CD8-positive, alpha-beta T cell (primary cell): ENCODE measurements at regions of chr5 and their contacts with region 1.

Region 1: GRCh38 chr5:148957591-148958202 is 105.2 kb downstream of the SH3TC2 start:
- DNase-seq: peak; percentile 15 to 69 (median 50)
- ATAC-seq: peak; percentile 58
- H3K4me3 ChIP-seq: no peak overlapping the region
- H3K4me3 Mint-ChIP-seq: no peak overlapping the region
- H3K27ac ChIP-seq: no peak overlapping the region
- H3K27ac Mint-ChIP-seq: no peak overlapping the region
- H3K4me1 ChIP-seq: no peaks in the 10 kb centered on the region
- H3K4me1 Mint-ChIP-seq: no peaks in the 10 kb centered on the region
- H3K27me3 ChIP-seq: no peaks in the 10 kb centered on the region
- H3K27me3 Mint-ChIP-seq: peaks cover 3% of the 10 kb centered on the region
- CTCF ChIP-seq: peak; percentile 90

Region 2: GRCh38 chr5:148740966-148741742 is 216.5 kb before region 1 on chr5:
- CTCF ChIA-PET with region 1: interaction called, 92 read pairs
- POLR2A ChIA-PET with region 1: no interaction called
- intact Hi-C with region 1: loop called (anchors 1 kb)
- DNase-seq: peak in 2 of 9 experiments; percentile 66 to 73
- ATAC-seq: peak; percentile 59
- H3K4me3 ChIP-seq: no peak overlapping the region
- H3K4me3 Mint-ChIP-seq: no peak overlapping the region
- H3K27ac ChIP-seq: no peak overlapping the region
- H3K27ac Mint-ChIP-seq: no peak overlapping the region
- H3K4me1 ChIP-seq: no peaks in the 10 kb centered on the region
- H3K4me1 Mint-ChIP-seq: no peaks in the 10 kb centered on the region
- H3K27me3 ChIP-seq: no peaks in the 10 kb centered on the region
- H3K27me3 Mint-ChIP-seq: peaks cover 25% of the 10 kb centered on the region
- CTCF ChIP-seq: peak; percentile 81

Region 3: GRCh38 chr5:148805326-148806290 is 152.1 kb before region 1 on chr5:
- CTCF ChIA-PET with region 1: interaction called, 11 read pairs
- POLR2A ChIA-PET with region 1: no interaction called
- intact Hi-C with region 1: no loop called
- DNase-seq: no peak
- ATAC-seq: no peak
- H3K4me3 ChIP-seq: no peak overlapping the region
- H3K4me3 Mint-ChIP-seq: no peak overlapping the region
- H3K27ac ChIP-seq: no peak overlapping the region
- H3K27ac Mint-ChIP-seq: no peak overlapping the region
- H3K4me1 ChIP-seq: peaks cover 16% of the 10 kb centered on the region
- H3K4me1 Mint-ChIP-seq: peaks cover 25% of the 10 kb centered on the region
- H3K27me3 ChIP-seq: no peaks in the 10 kb centered on the region
- H3K27me3 Mint-ChIP-seq: peaks cover 2% of the 10 kb centered on the region
- CTCF ChIP-seq: no peak

Region 4: DNA sequence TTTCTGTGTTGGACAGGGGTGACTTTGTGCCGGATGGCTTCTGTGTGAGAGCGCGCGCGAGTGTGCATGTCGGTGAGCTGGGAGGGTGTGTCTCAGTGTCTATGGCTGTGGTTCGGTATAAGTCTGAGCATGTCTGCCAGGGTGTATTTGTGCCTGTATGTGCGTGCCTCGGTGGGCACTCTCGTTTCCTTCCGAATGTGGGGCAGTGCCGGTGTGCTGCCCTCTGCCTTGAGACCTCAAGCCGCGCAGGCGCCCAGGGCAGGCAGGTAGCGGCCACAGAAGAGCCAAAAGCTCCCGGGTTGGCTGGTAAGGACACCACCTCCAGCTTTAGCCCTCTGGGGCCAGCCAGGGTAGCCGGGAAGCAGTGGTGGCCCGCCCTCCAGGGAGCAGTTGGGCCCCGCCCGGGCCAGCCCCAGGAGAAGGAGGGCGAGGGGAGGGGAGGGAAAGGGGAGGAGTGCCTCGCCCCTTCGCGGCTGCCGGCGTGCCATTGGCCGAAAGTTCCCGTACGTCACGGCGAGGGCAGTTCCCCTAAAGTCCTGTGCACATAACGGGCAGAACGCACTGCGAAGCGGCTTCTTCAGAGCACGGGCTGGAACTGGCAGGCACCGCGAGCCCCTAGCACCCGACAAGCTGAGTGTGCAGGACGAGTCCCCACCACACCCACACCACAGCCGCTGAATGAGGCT is 131.5 kb before region 1 on chr5 and contains the start of gene ADRB2:
- CTCF ChIA-PET with region 1: interaction called, 54 read pairs
- POLR2A ChIA-PET with region 1: interaction called, 3 read pairs
- intact Hi-C with region 1: loop called (anchors 1 to 5 kb)
- DNase-seq: peak; percentile 78 to 96 (median 86)
- ATAC-seq: peak; percentile 88
- H3K4me3 ChIP-seq: peak within 1 kb of the TSS; percentile 62 to 73
- H3K4me3 Mint-ChIP-seq: peak within 1 kb of the TSS; percentile 89
- H3K27ac ChIP-seq: peak within 1 kb of the TSS; percentile 57 to 75
- H3K27ac Mint-ChIP-seq: peak within 1 kb of the TSS; percentile 87
- H3K4me1 ChIP-seq: peaks cover 11% of the 10 kb centered on the region
- H3K4me1 Mint-ChIP-seq: peaks cover 53% of the 10 kb centered on the region
- H3K27me3 ChIP-seq: no peaks in the 10 kb centered on the region
- H3K27me3 Mint-ChIP-seq: no peaks in the 10 kb centered on the region
- CTCF ChIP-seq: no peak
- total RNA-seq, gene ADRB2: 7.6 to 8.8 TPM

Region 5: DNA sequence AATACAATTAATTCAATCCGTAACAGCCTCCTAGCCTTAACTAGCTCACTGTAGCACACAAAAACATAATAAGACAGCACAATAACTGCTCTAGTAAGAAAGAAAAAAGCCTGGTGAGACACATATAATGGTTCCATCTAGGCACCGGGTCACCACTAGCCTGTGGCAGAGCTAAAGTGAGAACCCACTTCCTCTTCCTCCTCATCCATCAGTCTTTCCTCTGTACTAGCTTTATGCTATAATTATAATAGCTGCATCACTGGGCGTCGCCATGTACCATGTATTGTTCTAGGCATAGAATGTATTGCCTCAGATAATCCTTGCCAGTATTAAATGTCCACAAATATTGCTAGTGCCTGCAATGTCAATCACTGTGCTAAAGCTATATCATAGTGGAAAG is 108.2 kb before region 1 on chr5:
- CTCF ChIA-PET with region 1: interaction called, 15 read pairs
- POLR2A ChIA-PET with region 1: interaction called, 4 read pairs
- intact Hi-C with region 1: loop called (anchors 5 kb)
- DNase-seq: peak in 6 of 9 experiments; percentile 13 to 86 (median 64)
- ATAC-seq: peak; percentile 58
- H3K4me3 ChIP-seq: peak overlapping the region in 1 of 2 experiments; percentile 11
- H3K4me3 Mint-ChIP-seq: peak overlapping the region; percentile 5
- H3K27ac ChIP-seq: peak overlapping the region; percentile 42 to 91
- H3K27ac Mint-ChIP-seq: peak overlapping the region; percentile 89
- H3K4me1 ChIP-seq: peaks cover 52% of the 10 kb centered on the region
- H3K4me1 Mint-ChIP-seq: peaks cover 71% of the 10 kb centered on the region
- H3K27me3 ChIP-seq: no peaks in the 10 kb centered on the region
- H3K27me3 Mint-ChIP-seq: no peaks in the 10 kb centered on the region
- CTCF ChIP-seq: no peak

Region 6: DNA sequence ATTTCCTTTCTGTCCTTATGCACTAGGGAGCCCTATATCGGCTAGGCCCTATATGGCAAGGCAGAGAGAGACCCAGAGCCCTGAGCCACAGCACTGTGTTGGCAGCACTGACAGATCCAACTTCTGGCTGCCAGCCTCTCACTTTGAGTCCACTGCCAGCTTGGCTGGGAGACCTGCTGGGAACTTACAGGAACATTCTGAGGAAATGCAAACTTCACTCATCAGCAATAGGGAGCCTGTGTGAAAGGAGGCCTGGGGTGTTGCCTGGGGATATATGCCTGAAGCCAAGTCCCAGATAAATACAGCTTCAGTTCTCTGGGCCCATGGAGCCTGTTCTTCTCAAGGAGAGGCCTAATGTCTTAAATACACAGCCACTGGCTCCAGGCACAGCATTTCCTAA is 53.3 kb before region 1 on chr5:
- CTCF ChIA-PET with region 1: no interaction called
- POLR2A ChIA-PET with region 1: no interaction called
- intact Hi-C with region 1: no loop called
- DNase-seq: no peak
- ATAC-seq: no peak
- H3K4me3 ChIP-seq: no peak overlapping the region
- H3K4me3 Mint-ChIP-seq: no peak overlapping the region
- H3K27ac ChIP-seq: no peak overlapping the region
- H3K27ac Mint-ChIP-seq: no peak overlapping the region
- H3K4me1 ChIP-seq: no peaks in the 10 kb centered on the region
- H3K4me1 Mint-ChIP-seq: peaks cover 2% of the 10 kb centered on the region
- H3K27me3 ChIP-seq: no peaks in the 10 kb centered on the region
- H3K27me3 Mint-ChIP-seq: no peaks in the 10 kb centered on the region
- CTCF ChIP-seq: no peak

Region 7: GRCh38 chr5:148970228-148970627 is 12.5 kb after region 1 on chr5:
- CTCF ChIA-PET with region 1: interaction called, 13 read pairs
- POLR2A ChIA-PET with region 1: no interaction called
- intact Hi-C with region 1: no loop called
- DNase-seq: no peak
- ATAC-seq: no peak
- H3K4me3 ChIP-seq: no peak overlapping the region
- H3K4me3 Mint-ChIP-seq: no peak overlapping the region
- H3K27ac ChIP-seq: no peak overlapping the region
- H3K27ac Mint-ChIP-seq: no peak overlapping the region
- H3K4me1 ChIP-seq: no peaks in the 10 kb centered on the region
- H3K4me1 Mint-ChIP-seq: no peaks in the 10 kb centered on the region
- H3K27me3 ChIP-seq: peaks cover 0 to 3% of the 10 kb centered on the region in 2 experiments
- H3K27me3 Mint-ChIP-seq: peaks cover 9% of the 10 kb centered on the region
- CTCF ChIP-seq: no peak

Region 8: GRCh38 chr5:148998174-148998797 is 40.6 kb after region 1 on chr5:
- CTCF ChIA-PET with region 1: interaction called, 12 read pairs
- POLR2A ChIA-PET with region 1: no interaction called
- intact Hi-C with region 1: no loop called
- DNase-seq: peak in 4 of 9 experiments; percentile 13 to 74 (median 52)
- ATAC-seq: peak; percentile 62
- H3K4me3 ChIP-seq: no peak overlapping the region
- H3K4me3 Mint-ChIP-seq: no peak overlapping the region
- H3K27ac ChIP-seq: no peak overlapping the region
- H3K27ac Mint-ChIP-seq: no peak overlapping the region
- H3K4me1 ChIP-seq: no peaks in the 10 kb centered on the region
- H3K4me1 Mint-ChIP-seq: peaks cover 2% of the 10 kb centered on the region
- H3K27me3 ChIP-seq: no peaks in the 10 kb centered on the region
- H3K27me3 Mint-ChIP-seq: peaks cover 23% of the 10 kb centered on the region
- CTCF ChIP-seq: peak; percentile 50